ENCODE measurements at regions of chr3 and their contacts with region 1.

Region 1: GRCh38 chr3:196942226-196942914 is at the start of gene NCBP2:
- DNase-seq: peak; percentile 98 to 100 (median 99)
- ATAC-seq: peak; percentile 97
- H3K4me3 ChIP-seq: peak within 1 kb of the TSS; percentile 100
- H3K4me3 Mint-ChIP-seq: peak within 1 kb of the TSS; percentile 94 to 99 (median 98)
- H3K27ac ChIP-seq: peak within 1 kb of the TSS; percentile 94
- H3K27ac Mint-ChIP-seq: peak within 1 kb of the TSS; percentile 96 to 100 (median 98)
- H3K4me1 ChIP-seq: peaks cover 16 to 20% of the 10 kb centered on the region in 2 donors
- H3K4me1 Mint-ChIP-seq: peaks cover 30 to 64% (median 49%) of the 10 kb centered on the region in 7 donors
- H3K27me3 ChIP-seq: no peaks in the 10 kb centered on the region
- H3K27me3 Mint-ChIP-seq: peaks cover 0 to 5% (median 0%) of the 10 kb centered on the region in 5 donors
- total RNA-seq, gene NCBP2: 42.9 to 77.3 (median 67.5) TPM

Region 2: DNA sequence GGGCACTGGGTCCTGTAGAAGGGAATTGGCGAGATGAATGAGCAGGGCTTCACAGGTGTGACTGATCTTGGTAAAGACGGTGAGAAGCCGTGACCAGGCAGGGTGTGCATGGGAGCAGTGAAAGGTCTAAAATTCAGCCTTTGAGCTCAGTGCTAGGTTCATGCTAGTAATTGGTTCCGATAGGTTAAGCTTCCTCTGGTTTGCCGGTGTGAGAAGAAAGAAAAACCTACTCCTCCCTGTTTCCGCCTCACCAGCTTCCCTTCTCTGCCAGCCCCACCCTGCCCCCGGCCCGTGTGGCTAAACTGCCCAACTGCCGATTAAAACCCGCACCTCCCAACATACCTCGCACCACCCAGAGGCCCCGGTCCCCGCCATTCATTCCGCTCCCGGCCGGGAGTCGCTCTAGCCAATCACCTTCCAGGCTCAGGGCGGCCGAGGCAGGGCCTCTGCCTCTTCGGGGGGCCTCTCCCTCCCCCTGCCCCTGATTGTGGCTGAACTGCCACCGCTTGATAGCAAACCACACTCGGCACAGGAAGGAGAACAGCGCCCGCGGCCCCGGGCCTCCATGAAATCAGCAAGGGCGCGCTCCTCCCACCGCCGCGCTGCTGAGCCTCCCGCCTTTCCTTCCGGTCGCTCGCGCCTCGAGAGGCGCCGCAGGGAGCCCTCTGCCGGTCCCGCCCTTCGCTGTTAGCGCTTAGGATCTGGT is 310.2 kb before region 1 on chr3:
- CTCF ChIA-PET with region 1: no interaction called
- POLR2A ChIA-PET with region 1: no interaction called
- intact Hi-C with region 1: loop called (anchors 1 kb)
- DNase-seq: peak; percentile 69 to 91 (median 88)
- ATAC-seq: peak; percentile 89
- H3K4me3 ChIP-seq: peak overlapping the region; percentile 48
- H3K4me3 Mint-ChIP-seq: peak overlapping the region; percentile 80 to 96 (median 90)
- H3K27ac ChIP-seq: peak overlapping the region; percentile 78
- H3K27ac Mint-ChIP-seq: peak overlapping the region; percentile 93 to 99 (median 97)
- H3K4me1 ChIP-seq: peaks cover 30 to 31% of the 10 kb centered on the region in 2 donors
- H3K4me1 Mint-ChIP-seq: peaks cover 31 to 74% (median 62%) of the 10 kb centered on the region in 7 donors
- H3K27me3 ChIP-seq: no peaks in the 10 kb centered on the region
- H3K27me3 Mint-ChIP-seq: no peaks in the 10 kb centered on the region

Region 3: DNA sequence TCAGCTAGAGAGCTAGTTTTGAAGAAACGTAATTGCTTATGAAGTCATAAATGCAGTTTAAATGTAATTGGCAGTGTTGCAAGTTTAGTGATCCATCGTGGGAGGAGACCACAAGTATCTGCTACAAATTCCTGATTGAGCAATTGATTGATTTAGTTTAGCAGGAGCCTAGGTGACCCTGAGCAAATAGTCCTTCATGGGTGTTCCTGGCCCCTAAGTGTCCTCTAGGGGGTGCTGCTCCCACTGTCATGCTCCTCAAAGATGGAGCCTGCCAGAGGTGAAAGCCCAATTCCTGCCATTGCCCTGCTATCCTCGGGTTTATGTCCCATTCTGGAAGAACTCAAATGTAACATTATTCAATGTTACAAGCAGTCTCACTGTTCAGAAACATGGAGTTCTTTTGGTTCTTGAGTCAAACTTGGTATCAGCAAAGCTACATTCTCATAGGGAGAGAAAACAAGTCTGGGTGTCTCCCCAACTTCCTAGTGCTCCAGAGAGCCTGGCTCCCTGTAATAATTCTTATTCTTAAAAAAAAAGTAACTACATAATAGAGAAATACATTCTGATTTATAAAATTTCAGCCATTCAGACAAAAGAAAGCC is 104.5 kb before region 1 on chr3:
- CTCF ChIA-PET with region 1: no interaction called
- POLR2A ChIA-PET with region 1: interaction called, 3 read pairs
- intact Hi-C with region 1: loop called (anchors 1 kb)
- DNase-seq: peak; percentile 37 to 73 (median 66)
- ATAC-seq: peak; percentile 95
- H3K4me3 ChIP-seq: no peak overlapping the region
- H3K4me3 Mint-ChIP-seq: no peak overlapping the region
- H3K27ac ChIP-seq: no peak overlapping the region
- H3K27ac Mint-ChIP-seq: peak overlapping the region in 2 of 9 donors; percentile 31 to 81
- H3K4me1 ChIP-seq: no peaks in the 10 kb centered on the region
- H3K4me1 Mint-ChIP-seq: peaks cover 0 to 6% (median 0%) of the 10 kb centered on the region in 7 donors
- H3K27me3 ChIP-seq: no peaks in the 10 kb centered on the region
- H3K27me3 Mint-ChIP-seq: no peaks in the 10 kb centered on the region

Region 4: DNA sequence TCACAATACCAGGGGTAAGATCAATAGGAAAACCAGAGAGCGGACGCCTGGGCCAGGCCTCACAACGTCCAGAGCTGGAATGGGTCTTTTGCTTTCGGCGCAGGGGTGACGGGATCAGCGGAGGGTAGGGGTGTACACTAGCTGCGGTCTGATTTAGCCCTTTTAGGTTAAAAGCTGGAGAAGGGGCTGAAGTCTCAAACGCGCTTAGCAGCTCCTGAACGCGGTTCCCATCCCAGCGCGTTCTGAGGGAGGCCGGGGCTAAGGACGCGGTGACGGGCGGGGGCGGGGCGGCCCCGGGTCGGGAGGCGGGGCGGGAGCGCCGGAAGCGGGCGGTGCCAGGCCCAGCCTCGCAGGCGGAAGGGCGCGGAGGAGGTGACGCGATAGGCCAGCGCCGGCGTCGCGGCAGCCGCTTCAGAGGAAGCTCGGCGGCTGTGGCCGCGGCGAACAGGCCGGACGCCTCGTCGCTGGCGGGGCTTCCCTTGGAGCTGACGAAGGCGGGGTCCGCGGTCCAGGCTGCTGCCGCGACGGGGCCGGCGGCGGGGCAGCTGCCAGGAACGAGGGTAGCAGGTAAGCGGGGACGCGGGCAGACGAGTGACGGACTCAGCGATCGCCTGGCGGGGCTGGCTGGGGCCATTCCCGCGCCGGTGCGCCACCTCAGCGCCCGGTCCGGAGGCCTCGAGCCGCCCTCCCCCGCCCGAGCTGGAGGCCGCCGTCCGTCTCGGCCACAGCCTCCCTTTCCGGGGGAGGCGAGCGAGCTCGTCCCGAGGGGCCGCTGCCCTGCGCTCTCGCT is 74.7 kb before region 1 on chr3 and contains the start of gene SENP5:
- CTCF ChIA-PET with region 1: interaction called, 3 read pairs
- POLR2A ChIA-PET with region 1: interaction called, 47 read pairs
- intact Hi-C with region 1: loop called (anchors 1 kb)
- DNase-seq: peak; percentile 79 to 92 (median 87)
- ATAC-seq: peak; percentile 99
- H3K4me3 ChIP-seq: peak within 1 kb of the TSS; percentile 86
- H3K4me3 Mint-ChIP-seq: peak within 1 kb of the TSS; percentile 90 to 99 (median 97)
- H3K27ac ChIP-seq: peak within 1 kb of the TSS; percentile 98
- H3K27ac Mint-ChIP-seq: peak within 1 kb of the TSS; percentile 90 to 99 (median 95)
- H3K4me1 ChIP-seq: peaks cover 13 to 16% of the 10 kb centered on the region in 2 donors
- H3K4me1 Mint-ChIP-seq: peaks cover 9 to 42% (median 34%) of the 10 kb centered on the region in 7 donors
- H3K27me3 ChIP-seq: no peaks in the 10 kb centered on the region
- H3K27me3 Mint-ChIP-seq: no peaks in the 10 kb centered on the region
- total RNA-seq, gene SENP5: 40.6 to 59.4 (median 43.1) TPM

Region 5: GRCh38 chr3:196902296-196902695 is 40.1 kb before region 1 on chr3:
- CTCF ChIA-PET with region 1: no interaction called
- POLR2A ChIA-PET with region 1: no interaction called
- intact Hi-C with region 1: no loop called
- DNase-seq: no peak
- ATAC-seq: no peak
- H3K4me3 ChIP-seq: no peak overlapping the region
- H3K4me3 Mint-ChIP-seq: no peak overlapping the region
- H3K27ac ChIP-seq: no peak overlapping the region
- H3K27ac Mint-ChIP-seq: no peak overlapping the region
- H3K4me1 ChIP-seq: no peaks in the 10 kb centered on the region
- H3K4me1 Mint-ChIP-seq: peaks cover 0 to 12% (median 2%) of the 10 kb centered on the region in 7 donors
- H3K27me3 ChIP-seq: no peaks in the 10 kb centered on the region
- H3K27me3 Mint-ChIP-seq: no peaks in the 10 kb centered on the region

Region 6: GRCh38 chr3:196969660-196970546 is 27.5 kb after region 1 on chr3:
- CTCF ChIA-PET with region 1: interaction called, 4 read pairs
- POLR2A ChIA-PET with region 1: interaction called, 9 read pairs
- intact Hi-C with region 1: loop called (anchors 1 kb)
- DNase-seq: peak; percentile 43 to 89 (median 66)
- ATAC-seq: peak; percentile 88
- H3K4me3 ChIP-seq: peak overlapping the region; percentile 48
- H3K4me3 Mint-ChIP-seq: peak overlapping the region; percentile 63 to 88 (median 82)
- H3K27ac ChIP-seq: no peak overlapping the region
- H3K27ac Mint-ChIP-seq: peak overlapping the region in 3 of 9 donors; percentile 32 to 53 (median 44)
- H3K4me1 ChIP-seq: no peaks in the 10 kb centered on the region
- H3K4me1 Mint-ChIP-seq: peaks cover 0 to 14% (median 6%) of the 10 kb centered on the region in 7 donors
- H3K27me3 ChIP-seq: no peaks in the 10 kb centered on the region
- H3K27me3 Mint-ChIP-seq: peaks cover 0 to 12% (median 4%) of the 10 kb centered on the region in 5 donors